ENCODE measurements at regions of chr14 and their contacts with region 1.

Region 1: DNA sequence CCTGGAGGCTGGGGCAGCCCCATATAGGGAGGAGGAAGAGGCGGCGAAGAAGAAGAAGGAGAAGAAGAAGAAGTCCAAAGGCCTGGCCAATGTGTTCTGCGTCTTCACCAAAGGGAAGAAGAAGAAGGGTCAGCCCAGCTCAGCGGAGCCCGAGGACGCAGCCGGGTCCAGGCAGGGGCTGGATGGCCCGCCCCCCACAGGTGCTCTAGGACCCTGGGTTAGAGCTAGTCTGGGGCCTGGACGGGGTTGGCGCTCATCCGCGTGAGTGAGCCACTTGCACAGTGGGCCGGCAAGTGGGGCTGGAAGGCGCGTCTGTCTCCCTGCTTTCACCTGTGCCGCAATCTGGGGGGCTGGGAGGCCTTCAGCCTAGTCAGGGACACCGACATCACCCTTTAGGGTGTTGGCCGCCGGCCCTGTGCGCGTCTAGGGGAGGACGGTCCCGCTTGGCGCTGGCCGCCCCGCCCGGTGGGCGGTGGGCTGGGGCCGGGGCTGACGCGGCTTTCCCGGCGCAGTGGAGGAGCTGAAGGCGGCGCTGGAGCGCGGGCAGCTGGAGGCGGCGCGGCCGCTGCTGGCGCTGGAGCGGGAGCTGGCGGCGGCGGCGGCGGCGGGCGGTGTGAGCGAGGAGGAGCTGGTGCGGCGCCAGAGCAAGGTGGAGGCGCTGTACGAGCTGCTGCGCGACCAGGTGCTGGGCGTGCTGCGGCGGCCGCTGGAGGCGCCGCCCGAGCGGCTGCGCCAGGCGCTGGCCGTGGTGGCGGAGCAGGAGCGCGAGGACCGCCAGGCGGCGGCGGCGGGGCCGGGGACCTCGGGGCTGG is 3.4 kb downstream of the TNFAIP2 start:
- DNase-seq: no peak
- H3K4me3 ChIP-seq: 0 out of 2 replicates have a peak overlapping the region, but pooled peaks have one; percentile 6
- H3K27me3 ChIP-seq: no peaks in the 10 kb centered on the region
- CTCF ChIP-seq: no peak

Region 2: DNA sequence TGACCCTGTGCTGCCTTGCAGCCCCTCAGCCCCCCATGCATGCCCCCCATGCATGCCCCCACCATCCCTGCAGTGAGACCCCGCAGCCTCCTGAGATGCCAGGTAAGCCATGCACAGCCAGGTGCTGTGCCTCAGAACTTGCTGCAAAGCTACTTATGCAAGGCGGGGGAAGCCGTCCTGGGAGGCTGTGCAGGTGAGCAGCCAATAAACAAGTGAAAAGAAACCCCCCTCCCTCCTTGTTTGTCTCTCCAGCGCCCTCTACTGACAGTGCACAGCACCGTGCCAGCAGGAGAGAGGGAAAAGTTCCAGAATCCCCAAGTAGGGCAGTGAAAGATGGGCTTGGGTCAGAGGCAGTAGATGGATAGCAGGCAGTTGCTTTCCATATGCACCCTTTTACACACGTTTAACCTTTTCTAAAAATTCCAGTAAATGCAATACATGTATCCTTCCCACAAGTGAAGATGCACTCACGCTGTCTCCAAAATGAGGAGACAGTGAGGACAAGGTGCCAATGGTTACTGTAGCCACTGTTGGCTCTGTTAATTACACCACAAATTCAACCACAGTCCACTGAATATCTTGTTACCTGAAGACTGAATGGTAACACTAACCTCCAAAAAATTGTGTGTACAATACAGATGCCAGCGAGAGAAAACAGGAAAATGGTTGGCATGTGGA is 14.6 kb after region 1 on chr14:
- CTCF ChIA-PET with region 1: interaction called, 13 read pairs
- POLR2A ChIA-PET with region 1: no interaction called
- DNase-seq: no peak
- H3K4me3 ChIP-seq: no peak overlapping the region
- H3K27me3 ChIP-seq: peaks cover 2% of the 10 kb centered on the region; the same call in 1 of the 2 replicates
- CTCF ChIP-seq: peak; percentile 77

Region 3: DNA sequence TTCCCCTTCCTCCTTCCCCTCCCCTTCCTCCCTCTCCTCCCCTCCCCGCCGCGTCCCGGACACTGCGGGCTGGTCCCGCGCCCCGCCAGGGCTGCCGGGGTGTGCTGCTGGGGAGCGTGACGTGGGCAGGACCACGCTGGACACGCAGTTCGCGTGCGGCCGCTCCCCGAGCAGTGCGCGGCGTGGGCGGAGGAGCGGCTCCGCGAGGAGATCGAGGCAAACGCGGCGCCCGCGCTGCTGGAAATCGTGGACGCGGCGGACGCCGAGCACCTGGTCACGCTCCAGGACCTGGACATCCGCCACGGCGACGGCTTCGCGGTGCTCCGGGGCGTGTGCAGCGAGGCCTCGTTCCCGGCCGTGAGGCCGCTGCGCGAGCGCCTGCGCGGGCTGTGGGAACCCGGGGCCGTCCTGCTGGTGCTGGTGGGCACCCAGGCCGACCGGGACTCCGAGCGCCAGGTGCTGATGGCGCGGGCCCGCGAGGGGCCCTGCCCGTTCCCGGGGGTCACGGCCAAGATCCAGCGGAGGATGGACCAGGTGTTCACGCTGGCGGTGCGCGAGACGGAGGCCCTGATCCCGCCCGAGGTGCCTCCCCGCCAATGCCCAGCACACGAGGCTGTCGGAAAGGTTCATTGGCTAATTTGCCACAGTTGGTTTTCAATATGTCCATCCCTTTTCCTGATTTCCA is 80.8 kb after region 1 on chr14:
- CTCF ChIA-PET with region 1: no interaction called
- POLR2A ChIA-PET with region 1: interaction called, 10 read pairs
- DNase-seq: no peak
- H3K4me3 ChIP-seq: peak overlapping the region; percentile 57
- H3K27me3 ChIP-seq: no peaks in the 10 kb centered on the region
- CTCF ChIP-seq: no peak

Region 4: GRCh38 chr14:103315351-103315911 is 188.7 kb after region 1 on chr14:
- CTCF ChIA-PET with region 1: no interaction called
- POLR2A ChIA-PET with region 1: no interaction called
- DNase-seq: no peak
- H3K4me3 ChIP-seq: no peak overlapping the region
- H3K27me3 ChIP-seq: peaks cover 9% of the 10 kb centered on the region
- CTCF ChIP-seq: no peak

Measured in BJ (cell line).